ENCODE measurements at regions of chr15 and their contacts with region 1.

Region 1: GRCh38 chr15:86973376-86973775 is 893.7 kb downstream of the AGBL1 start:
- DNase-seq: no peak
- ATAC-seq: no peak
- H3K4me3 ChIP-seq: no peak overlapping the region
- H3K27ac ChIP-seq: no peak overlapping the region
- H3K4me1 ChIP-seq: no peaks in the 10 kb centered on the region
- H3K27me3 ChIP-seq: no peaks in the 10 kb centered on the region
- CTCF ChIP-seq: no peak

Region 2: DNA sequence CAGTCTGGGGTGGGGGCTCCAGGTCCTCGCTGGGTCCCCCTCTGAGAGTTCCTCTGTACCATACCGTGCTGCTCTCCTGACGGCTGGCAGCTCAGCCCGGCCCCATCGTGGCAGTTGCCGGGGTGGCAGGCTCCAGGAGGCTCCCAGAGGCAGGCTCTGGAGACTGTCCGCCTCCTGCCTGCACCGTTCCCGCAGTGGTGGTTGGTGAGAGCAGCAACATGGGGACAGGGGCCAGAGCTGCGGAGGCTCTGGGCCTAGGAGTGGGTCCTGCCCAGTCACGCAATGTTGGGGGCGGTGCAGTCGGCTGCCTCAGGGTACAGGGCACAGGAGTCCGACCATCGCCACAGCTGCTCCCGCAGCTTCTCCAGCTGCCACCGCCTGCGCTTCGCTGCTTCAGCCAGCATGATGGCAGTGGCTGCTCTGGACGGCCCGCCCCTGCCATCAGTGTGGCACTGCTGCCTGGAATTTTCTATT is 401.0 kb before region 1 on chr15:
- intact Hi-C with region 1: no loop called
- DNase-seq: peak in 1 of 2 donors; percentile 13
- ATAC-seq: peak; percentile 25 to 76 (median 56)
- H3K4me3 ChIP-seq: peak overlapping the region in 6 of 10 donors; percentile 9 to 27 (median 22)
- H3K27ac ChIP-seq: no peak overlapping the region
- H3K4me1 ChIP-seq: no peaks in the 10 kb centered on the region
- H3K27me3 ChIP-seq: peaks cover 0 to 8% (median under 1%) of the 10 kb centered on the region in 7 donors
- CTCF ChIP-seq: no peak

Region 3: GRCh38 chr15:86624261-86625036 is 348.9 kb before region 1 on chr15:
- intact Hi-C with region 1: loop called in 1 of 10 experiments (anchors 10 kb)
- DNase-seq: peak; percentile 71 to 75
- ATAC-seq: peak; percentile 96 to 100 (median 98)
- H3K4me3 ChIP-seq: no peak overlapping the region
- H3K27ac ChIP-seq: peak overlapping the region in 5 of 10 donors; percentile 3 to 50 (median 34)
- H3K4me1 ChIP-seq: peaks cover 0 to 11% (median 0%) of the 10 kb centered on the region in 9 donors
- H3K27me3 ChIP-seq: no peaks in the 10 kb centered on the region
- CTCF ChIP-seq: peak; percentile 27 to 66 (median 50)